ENCODE measurements at regions of chr16 and their contacts with region 1.

Region 1: GRCh38 chr16:381789-382717 is at the start of gene PGAP6:
- DNase-seq: peak; percentile 36 to 83 (median 51)
- ATAC-seq: peak; percentile 83
- H3K4me3 ChIP-seq: peak within 1 kb of the TSS; percentile 79
- H3K4me3 Mint-ChIP-seq: peak within 1 kb of the TSS; percentile 85 to 97 (median 90)
- H3K27ac ChIP-seq: peak within 1 kb of the TSS; percentile 81
- H3K27ac Mint-ChIP-seq: peak within 1 kb of the TSS; percentile 58 to 98 (median 90)
- H3K4me1 ChIP-seq: peaks cover 18 to 23% of the 10 kb centered on the region in 2 donors
- H3K4me1 Mint-ChIP-seq: peaks cover 7 to 32% (median 21%) of the 10 kb centered on the region in 7 donors
- H3K27me3 ChIP-seq: no peaks in the 10 kb centered on the region
- H3K27me3 Mint-ChIP-seq: peaks cover 0 to 11% (median 0%) of the 10 kb centered on the region in 5 donors
- total RNA-seq, gene PGAP6: 32.2 to 107 (median 89.4) TPM

Region 2: GRCh38 chr16:330741-331140 is 51.3 kb before region 1 on chr16:
- CTCF ChIA-PET with region 1: no interaction called
- POLR2A ChIA-PET with region 1: no interaction called
- intact Hi-C with region 1: no loop called
- DNase-seq: no peak
- ATAC-seq: no peak
- H3K4me3 ChIP-seq: no peak overlapping the region
- H3K4me3 Mint-ChIP-seq: no peak overlapping the region
- H3K27ac ChIP-seq: no peak overlapping the region
- H3K27ac Mint-ChIP-seq: peak overlapping the region in 3 of 9 donors; percentile 24 to 81 (median 57)
- H3K4me1 ChIP-seq: peaks cover 39 to 41% of the 10 kb centered on the region in 2 donors
- H3K4me1 Mint-ChIP-seq: peaks cover 26 to 75% (median 61%) of the 10 kb centered on the region in 7 donors
- H3K27me3 ChIP-seq: no peaks in the 10 kb centered on the region
- H3K27me3 Mint-ChIP-seq: peaks cover 0 to 4% (median 0%) of the 10 kb centered on the region in 5 donors

Region 3: GRCh38 chr16:483341-484075 is 101.5 kb after region 1 on chr16:
- CTCF ChIA-PET with region 1: no interaction called
- POLR2A ChIA-PET with region 1: no interaction called
- intact Hi-C with region 1: loop called in 1 of 2 experiments (anchors 10 kb)
- DNase-seq: no peak
- ATAC-seq: no peak
- H3K4me3 ChIP-seq: no peak overlapping the region
- H3K4me3 Mint-ChIP-seq: no peak overlapping the region
- H3K27ac ChIP-seq: no peak overlapping the region
- H3K27ac Mint-ChIP-seq: no peak overlapping the region
- H3K4me1 ChIP-seq: no peaks in the 10 kb centered on the region
- H3K4me1 Mint-ChIP-seq: peaks cover 0 to 5% (median 0%) of the 10 kb centered on the region in 7 donors
- H3K27me3 ChIP-seq: no peaks in the 10 kb centered on the region
- H3K27me3 Mint-ChIP-seq: no peaks in the 10 kb centered on the region